Posterior cingulate gyrus (tissue), 11 donors: ENCODE measurements at regions of chr17 and their contacts with region 1.

Region 1: GRCh38 chr17:47368262-47368661 is 44.5 kb downstream of the EFCAB13 start:
- DNase-seq: no peak

Region 2: GRCh38 chr17:47240806-47241205 is 127.5 kb before region 1 on chr17:
- intact Hi-C with region 1: no loop called
- DNase-seq: no peak

Region 3: DNA sequence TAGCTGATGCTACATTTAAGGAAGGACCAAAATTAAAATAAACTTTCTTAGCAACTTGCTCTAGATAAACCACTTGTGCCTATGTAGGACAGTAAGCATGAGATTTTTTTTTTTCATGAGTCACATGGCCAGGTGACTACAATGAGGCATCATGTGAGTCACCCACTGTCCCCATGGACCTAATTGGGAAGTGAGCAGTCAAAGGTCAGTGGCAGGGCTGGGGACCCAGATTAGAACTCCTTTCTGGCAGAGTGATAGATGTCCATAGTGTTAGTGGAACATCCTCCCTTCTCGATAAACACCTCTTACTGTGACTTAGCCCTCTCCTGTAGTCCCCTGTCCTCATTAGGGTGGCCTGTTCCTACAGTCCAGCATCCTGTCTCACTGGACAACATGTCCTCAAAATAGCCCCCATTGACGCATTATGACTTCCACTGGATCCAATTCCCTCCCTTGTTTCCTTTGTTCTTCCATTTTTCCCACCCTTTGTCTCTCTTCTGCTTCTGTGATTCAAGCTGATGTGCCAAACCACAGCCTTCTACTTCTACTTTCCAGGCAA is 102.2 kb before region 1 on chr17:
- intact Hi-C with region 1: no loop called
- DNase-seq: no peak

Region 4: DNA sequence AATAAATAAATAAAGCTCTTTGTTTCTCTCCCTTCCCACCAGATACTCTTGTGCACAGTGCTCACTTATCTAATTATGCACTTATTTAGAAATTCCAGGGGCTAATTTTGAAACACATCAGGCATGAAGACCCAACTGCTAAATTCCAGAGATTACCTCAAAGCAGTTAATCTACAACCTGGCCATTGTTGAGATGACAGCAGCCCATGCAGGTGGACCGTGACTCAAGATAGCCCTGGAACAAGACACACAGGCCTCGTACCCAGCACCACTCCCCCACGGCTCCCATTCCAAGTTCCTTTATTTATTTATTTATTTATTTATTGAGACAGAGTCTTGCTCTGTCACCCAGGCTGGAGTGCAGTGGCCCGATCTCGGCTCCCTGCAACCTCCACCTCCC is 102.6 kb after region 1 on chr17:
- intact Hi-C with region 1: no loop called
- DNase-seq: no peak

Region 5: GRCh38 chr17:47615766-47616424 is 247.6 kb after region 1 on chr17:
- intact Hi-C with region 1: loop called (anchors 10 kb)
- DNase-seq: no peak